ENCODE measurements at regions of chr6 and their contacts with region 1.

Region 1: DNA sequence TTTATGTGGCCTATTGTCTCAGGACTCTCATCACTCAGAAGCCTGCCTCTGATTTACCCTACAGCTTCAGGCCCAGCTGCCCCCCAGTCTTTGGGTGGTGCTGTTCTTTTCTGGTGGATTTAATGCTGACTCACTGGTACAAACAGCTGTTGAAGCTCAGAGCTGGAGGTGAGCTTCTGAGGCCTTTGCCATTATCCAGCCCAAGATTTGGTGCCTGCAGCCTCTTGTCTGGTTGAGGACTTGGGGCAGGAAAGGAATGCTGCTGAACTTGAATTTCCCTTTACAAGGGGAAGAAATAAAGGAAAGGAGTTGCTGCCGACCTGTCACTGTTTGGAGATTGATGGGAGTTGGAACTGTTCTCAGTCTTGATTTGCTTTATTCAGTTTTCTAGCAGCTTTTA is 19.8 kb downstream of the ABCF1 start:
- DNase-seq: no peak
- H3K4me3 ChIP-seq: no peak overlapping the region
- H3K27ac ChIP-seq: no peak overlapping the region
- H3K4me1 ChIP-seq: no peaks in the 10 kb centered on the region
- H3K27me3 ChIP-seq: no peaks in the 10 kb centered on the region
- CTCF ChIP-seq: no peak
- EP300 ChIP-seq: no peak
- POLR2A ChIP-seq: no peak
- RAD21 ChIP-seq: no peak

Region 2: DNA sequence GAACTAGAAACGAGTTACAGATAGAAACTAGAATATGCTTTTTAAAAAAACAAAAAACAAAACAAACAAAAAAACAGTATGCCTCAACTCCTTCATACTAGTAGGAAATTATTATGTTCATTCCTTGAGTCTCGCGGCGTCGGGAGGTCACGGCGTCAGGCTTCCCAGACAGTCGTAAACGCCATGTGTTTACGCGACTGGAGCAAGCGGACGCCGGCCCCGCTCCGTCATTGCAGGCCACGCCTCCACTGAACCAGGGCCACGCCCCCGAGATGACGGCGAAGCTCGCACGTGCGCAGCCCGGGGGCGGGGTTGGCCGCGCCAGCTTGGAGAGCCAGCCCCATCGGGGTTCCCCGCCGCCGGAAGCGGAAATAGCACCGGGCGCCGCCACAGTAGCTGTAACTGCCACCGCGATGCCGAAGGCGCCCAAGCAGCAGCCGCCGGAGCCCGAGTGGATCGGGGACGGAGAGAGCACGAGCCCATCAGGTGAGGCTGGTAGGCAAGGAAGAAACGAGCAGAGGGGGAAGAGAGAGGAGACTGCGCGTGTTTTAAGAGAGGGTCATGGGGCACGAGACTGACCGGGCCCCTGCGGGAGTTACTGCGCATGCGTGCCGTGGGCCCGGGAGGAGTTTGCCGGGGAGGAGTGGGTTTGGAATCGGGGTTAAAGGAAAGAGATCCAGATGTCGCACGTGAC is 19.8 kb before region 1 on chr6 and contains the start of gene ABCF1:
- CTCF ChIA-PET with region 1: interaction called, 10 read pairs
- POLR2A ChIA-PET with region 1: interaction called, 712 read pairs
- DNase-seq: peak; percentile 90 to 100
- H3K4me3 ChIP-seq: peak within 1 kb of the TSS; percentile 88 to 98 (median 95)
- H3K27ac ChIP-seq: peak within 1 kb of the TSS; percentile 95
- H3K4me1 ChIP-seq: peaks cover 0 to 4% (median 2%) of the 10 kb centered on the region in 4 experiments; a peak in 5 of 7 replicates
- H3K27me3 ChIP-seq: no peaks in the 10 kb centered on the region
- CTCF ChIP-seq: no peak
- EP300 ChIP-seq: no peak
- POLR2A ChIP-seq: peak in 1 of 2 experiments; percentile 94; a peak in 2 of 3 replicates
- RAD21 ChIP-seq: no peak
- total RNA-seq, gene ABCF1: 119 and 123 TPM in 2 replicates

Region 3: DNA sequence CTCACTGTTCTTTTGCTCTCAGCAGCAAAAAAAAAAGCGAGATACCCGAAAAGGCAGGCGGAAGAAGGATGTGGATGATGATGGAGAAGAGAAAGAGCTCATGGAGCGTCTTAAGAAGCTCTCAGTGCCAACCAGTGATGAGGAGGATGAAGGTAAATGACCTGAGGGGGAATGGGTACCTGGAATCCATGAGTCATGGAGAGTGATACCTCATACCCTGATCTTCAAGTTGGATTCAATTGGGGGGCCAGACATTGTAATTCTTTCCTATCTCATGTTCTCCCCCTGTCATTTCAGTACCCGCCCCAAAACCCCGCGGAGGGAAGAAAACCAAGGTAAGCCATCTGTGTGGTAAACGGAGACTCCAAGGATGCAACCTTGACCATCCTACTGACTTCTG is 12.9 kb before region 1 on chr6:
- CTCF ChIA-PET with region 1: interaction called, 23 read pairs
- POLR2A ChIA-PET with region 1: interaction called, 712 read pairs
- DNase-seq: no peak
- H3K4me3 ChIP-seq: no peak overlapping the region
- H3K27ac ChIP-seq: no peak overlapping the region
- H3K4me1 ChIP-seq: no peaks in the 10 kb centered on the region
- H3K27me3 ChIP-seq: no peaks in the 10 kb centered on the region
- CTCF ChIP-seq: no peak
- EP300 ChIP-seq: no peak
- POLR2A ChIP-seq: no peak
- RAD21 ChIP-seq: no peak

Region 4: GRCh38 chr6:30611150-30611855 is 20.3 kb after region 1 on chr6:
- CTCF ChIA-PET with region 1: interaction called, 20 read pairs
- POLR2A ChIA-PET with region 1: interaction called, 712 read pairs
- DNase-seq: no peak
- H3K4me3 ChIP-seq: no peak overlapping the region
- H3K27ac ChIP-seq: no peak overlapping the region
- H3K4me1 ChIP-seq: peaks cover 0 to 6% (median 3%) of the 10 kb centered on the region in 4 experiments; a peak in 4 of 7 replicates
- H3K27me3 ChIP-seq: no peaks in the 10 kb centered on the region
- CTCF ChIP-seq: no peak
- EP300 ChIP-seq: no peak
- POLR2A ChIP-seq: no peak
- RAD21 ChIP-seq: no peak

Region 5: DNA sequence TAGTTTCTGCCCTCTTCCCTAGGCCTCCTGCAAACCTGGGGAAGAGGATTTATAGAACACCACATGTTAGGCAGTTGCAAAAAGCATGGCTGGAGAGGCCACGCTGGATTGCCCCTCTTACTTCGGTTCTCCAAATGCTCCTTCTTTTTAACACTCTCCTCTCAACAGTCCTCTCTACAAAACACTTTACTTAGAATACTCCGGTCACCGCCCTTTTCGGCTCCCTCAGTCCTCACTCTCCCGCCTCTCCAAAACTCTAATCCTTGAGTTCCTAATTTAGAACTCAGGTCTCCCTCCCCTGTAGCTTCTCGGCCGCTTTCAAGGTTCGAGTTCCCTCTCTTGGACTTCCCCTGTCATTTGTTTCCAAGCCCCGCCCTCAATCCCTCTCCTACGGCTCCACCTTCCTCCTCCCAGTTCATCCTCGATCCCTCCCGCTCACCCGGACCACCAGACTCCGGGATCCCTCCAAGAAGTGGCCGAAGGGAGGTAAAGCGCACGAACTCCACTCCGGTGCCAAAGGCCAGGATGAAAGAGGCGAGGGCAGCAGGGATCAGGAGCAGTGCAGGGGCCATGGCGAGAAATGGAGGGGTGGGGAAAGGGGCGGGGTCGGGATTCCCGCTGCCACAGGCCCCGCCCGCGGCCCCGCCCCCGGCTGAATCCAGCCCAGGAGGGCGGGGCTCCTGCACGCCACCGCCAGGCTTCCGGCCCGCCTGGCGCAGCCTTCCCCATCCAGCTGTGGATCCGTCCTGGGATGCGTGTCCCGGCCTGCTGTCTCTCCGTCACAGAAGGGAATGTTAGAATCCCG is 99.6 kb after region 1 on chr6 and contains the start of gene NRM:
- CTCF ChIA-PET with region 1: no interaction called
- POLR2A ChIA-PET with region 1: no interaction called
- DNase-seq: peak in 1 of 2 experiments; percentile 89
- H3K4me3 ChIP-seq: peak within 1 kb of the TSS; percentile 86 to 92 (median 88)
- H3K27ac ChIP-seq: no peak within 1 kb of the TSS; the same call in none of the 2 replicates
- H3K4me1 ChIP-seq: peaks cover 0 to 23% (median 17%) of the 10 kb centered on the region in 4 experiments; a peak in 6 of 7 replicates
- H3K27me3 ChIP-seq: no peaks in the 10 kb centered on the region
- CTCF ChIP-seq: no peak
- EP300 ChIP-seq: no peak
- POLR2A ChIP-seq: peak in 1 of 2 experiments; percentile 41; a peak in 1 of 3 replicates
- RAD21 ChIP-seq: no peak
- total RNA-seq, gene NRM: 27.3 and 28.0 TPM in 2 replicates

Region 6: DNA sequence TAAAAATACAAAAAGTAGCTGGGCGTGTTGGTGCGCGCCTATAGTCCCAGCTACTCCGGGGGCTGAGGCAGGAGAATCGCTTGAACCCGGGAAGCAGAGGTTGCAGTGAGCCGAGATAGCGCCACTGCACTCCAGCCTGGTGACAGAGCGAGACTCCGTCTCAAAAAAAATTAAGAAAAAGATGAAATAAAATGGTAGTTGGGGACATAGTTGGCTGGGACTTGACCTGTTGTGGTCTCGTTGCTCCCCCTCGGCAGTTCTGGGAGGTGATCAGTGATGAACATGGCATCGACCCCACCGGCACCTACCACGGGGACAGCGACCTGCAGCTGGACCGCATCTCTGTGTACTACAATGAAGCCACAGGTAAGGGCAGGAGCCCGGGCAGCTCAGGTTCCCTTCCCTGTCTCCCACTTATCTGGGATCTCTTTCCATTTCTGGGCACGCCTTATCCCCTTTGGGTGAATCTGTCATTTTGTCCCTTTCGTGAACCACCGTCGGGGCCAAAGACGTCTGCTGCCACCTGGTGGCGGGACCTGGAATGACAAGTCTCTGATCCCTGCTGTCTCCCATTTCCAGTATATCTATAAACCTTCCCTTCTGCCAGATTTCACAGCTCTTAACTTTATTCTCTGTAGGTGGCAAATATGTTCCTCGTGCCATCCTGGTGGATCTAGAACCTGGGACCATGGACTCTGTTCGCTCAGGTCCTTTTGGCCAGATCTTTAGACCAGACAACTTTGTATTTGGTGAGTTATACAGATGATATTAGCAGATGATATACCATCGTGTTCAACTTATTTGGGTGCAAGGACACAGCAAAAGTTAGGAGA is 131.5 kb after region 1 on chr6:
- CTCF ChIA-PET with region 1: no interaction called
- POLR2A ChIA-PET with region 1: no interaction called
- DNase-seq: peak in 1 of 2 experiments; percentile 92
- H3K4me3 ChIP-seq: peak overlapping the region; percentile 96 to 100 (median 96); a peak in 7 of 8 replicates
- H3K27ac ChIP-seq: no peak overlapping the region
- H3K4me1 ChIP-seq: peaks cover 0 to 4% (median 1%) of the 10 kb centered on the region in 4 experiments; a peak in 4 of 7 replicates
- H3K27me3 ChIP-seq: no peaks in the 10 kb centered on the region
- CTCF ChIP-seq: peak; percentile 85 to 88 (median 87)
- EP300 ChIP-seq: no peak
- POLR2A ChIP-seq: peak; percentile 61 to 77; a peak in 2 of 3 replicates
- RAD21 ChIP-seq: peak; percentile 71 to 80

Region 7: GRCh38 chr6:30738532-30738931 is 147.5 kb after region 1 on chr6:
- CTCF ChIA-PET with region 1: no interaction called
- POLR2A ChIA-PET with region 1: no interaction called
- DNase-seq: no peak
- H3K4me3 ChIP-seq: no peak overlapping the region
- H3K27ac ChIP-seq: no peak overlapping the region
- H3K4me1 ChIP-seq: peaks cover 3 to 12% (median 5%) of the 10 kb centered on the region in 4 experiments; a peak in 6 of 7 replicates
- H3K27me3 ChIP-seq: no peaks in the 10 kb centered on the region
- CTCF ChIP-seq: no peak
- EP300 ChIP-seq: no peak
- POLR2A ChIP-seq: no peak
- RAD21 ChIP-seq: no peak